ENCODE measurements at regions of chr14 and their contacts with region 1.

Region 1: GRCh38 chr14:94738751-94739150 is 31.2 kb downstream of the GSC start:
- DNase-seq: no peak
- H3K4me3 ChIP-seq: no peak overlapping the region
- H3K27ac ChIP-seq: no peak overlapping the region
- H3K4me1 ChIP-seq: no peaks in the 10 kb centered on the region
- H3K27me3 ChIP-seq: no peaks in the 10 kb centered on the region
- CTCF ChIP-seq: no peak
- POLR2A ChIP-seq: no peak

Region 2: GRCh38 chr14:93870377-93870776 is 868.4 kb before region 1 on chr14:
- intact Hi-C with region 1: no loop called
- DNase-seq: no peak
- H3K4me3 ChIP-seq: no peak overlapping the region
- H3K27ac ChIP-seq: no peak overlapping the region
- H3K4me1 ChIP-seq: no peaks in the 10 kb centered on the region
- H3K27me3 ChIP-seq: no peaks in the 10 kb centered on the region
- CTCF ChIP-seq: no peak
- POLR2A ChIP-seq: no peak

Region 3: GRCh38 chr14:94337274-94337673 is 401.5 kb before region 1 on chr14:
- intact Hi-C with region 1: loop called (anchors 10 kb)
- DNase-seq: no peak
- H3K4me3 ChIP-seq: no peak overlapping the region
- H3K27ac ChIP-seq: no peak overlapping the region
- H3K4me1 ChIP-seq: peaks cover 0 to 6% of the 10 kb centered on the region in 2 donors
- H3K27me3 ChIP-seq: no peaks in the 10 kb centered on the region
- CTCF ChIP-seq: no peak
- POLR2A ChIP-seq: no peak

Region 4: DNA sequence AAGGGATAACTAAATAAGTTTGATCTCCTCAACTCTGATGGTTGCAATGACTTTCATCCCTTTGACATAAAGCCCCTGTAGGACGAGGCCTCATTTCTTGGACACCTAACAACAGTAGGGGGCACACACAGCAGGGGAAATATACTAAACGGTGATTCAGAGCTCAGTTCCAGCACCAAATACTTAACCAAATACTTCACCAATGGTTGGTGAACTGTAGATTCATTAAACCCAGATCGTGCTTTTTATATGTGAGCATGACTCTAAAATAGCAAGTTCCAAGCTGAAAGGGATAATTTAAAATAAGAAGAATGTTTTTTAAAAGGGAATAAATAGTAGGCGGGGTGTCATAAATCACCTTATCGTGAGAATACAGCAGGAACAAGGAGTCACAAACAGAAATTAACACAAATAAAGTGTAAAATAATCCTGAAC is 1571.2 kb after region 1 on chr14:
- intact Hi-C with region 1: loop called (anchors 10 kb)
- DNase-seq: no peak
- H3K4me3 ChIP-seq: no peak overlapping the region
- H3K27ac ChIP-seq: no peak overlapping the region
- H3K4me1 ChIP-seq: no peaks in the 10 kb centered on the region
- H3K27me3 ChIP-seq: no peaks in the 10 kb centered on the region
- CTCF ChIP-seq: no peak
- POLR2A ChIP-seq: no peak

Measured in breast epithelium (tissue), 4 donors.